ENCODE measurements at regions of chr13 and their contacts with region 1.

Region 1: GRCh38 chr13:45393941-45394570 is 24.1 kb downstream of the SLC25A30 start:
- DNase-seq: peak; percentile 63
- ATAC-seq: no peak
- H3K4me3 Mint-ChIP-seq: no peak overlapping the region
- H3K27ac Mint-ChIP-seq: no peak overlapping the region
- H3K4me1 Mint-ChIP-seq: peaks cover 44% of the 10 kb centered on the region
- H3K27me3 Mint-ChIP-seq: no peaks in the 10 kb centered on the region
- CTCF ChIP-seq: peak; percentile 74

Region 2: DNA sequence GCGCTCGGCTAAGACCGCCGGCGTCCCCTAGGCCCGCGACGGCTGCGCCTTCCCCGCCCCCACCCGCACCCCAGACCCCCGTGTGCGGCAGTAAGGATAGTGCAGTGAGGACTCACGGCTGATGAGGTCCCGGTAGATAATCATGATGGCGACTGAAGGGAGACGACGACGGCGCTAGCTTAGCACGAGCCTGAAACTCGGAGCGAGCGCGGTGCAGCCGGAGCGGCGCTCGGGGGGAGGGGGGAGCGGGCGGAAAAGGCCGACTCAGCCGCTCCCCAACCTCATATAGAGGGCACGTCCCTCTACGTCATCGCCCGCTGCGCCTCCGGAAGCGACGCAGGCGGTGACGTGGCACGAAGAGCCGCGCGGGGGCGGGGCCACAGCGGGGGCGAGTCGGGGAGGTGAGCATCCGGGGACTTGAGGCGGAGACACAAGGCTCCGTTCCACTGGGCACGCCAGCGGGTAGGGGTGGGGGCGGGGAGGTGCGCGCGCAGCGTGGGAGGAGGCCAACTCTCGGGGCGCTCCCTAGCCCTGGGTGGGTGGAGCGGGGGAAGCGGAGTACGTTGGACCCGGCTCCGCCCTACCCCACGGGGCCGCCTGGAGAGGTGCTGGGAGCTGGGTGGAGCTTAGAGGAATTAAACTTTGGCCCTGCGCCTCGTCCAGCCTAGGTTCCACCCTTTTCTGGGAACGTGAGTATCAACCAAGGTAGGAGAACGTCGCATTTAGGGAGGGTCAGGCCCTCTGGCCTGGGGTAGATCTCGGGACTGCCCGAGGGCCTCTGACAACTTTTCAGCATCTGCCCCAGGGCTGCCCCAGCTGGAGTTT is 52.9 kb before region 1 on chr13 and contains the start of gene TPT1:
- CTCF ChIA-PET with region 1: interaction called, 5 read pairs
- POLR2A ChIA-PET with region 1: interaction called, 19 read pairs
- intact Hi-C with region 1: loop called (anchors 2 kb)
- DNase-seq: peak; percentile 99
- ATAC-seq: peak; percentile 88
- H3K4me3 Mint-ChIP-seq: peak within 1 kb of the TSS; percentile 97
- H3K27ac Mint-ChIP-seq: peak within 1 kb of the TSS; percentile 100
- H3K4me1 Mint-ChIP-seq: peaks cover 44% of the 10 kb centered on the region
- H3K27me3 Mint-ChIP-seq: no peaks in the 10 kb centered on the region
- CTCF ChIP-seq: no peak
- total RNA-seq, gene TPT1: 3,533 to 3,563 TPM

Region 3: DNA sequence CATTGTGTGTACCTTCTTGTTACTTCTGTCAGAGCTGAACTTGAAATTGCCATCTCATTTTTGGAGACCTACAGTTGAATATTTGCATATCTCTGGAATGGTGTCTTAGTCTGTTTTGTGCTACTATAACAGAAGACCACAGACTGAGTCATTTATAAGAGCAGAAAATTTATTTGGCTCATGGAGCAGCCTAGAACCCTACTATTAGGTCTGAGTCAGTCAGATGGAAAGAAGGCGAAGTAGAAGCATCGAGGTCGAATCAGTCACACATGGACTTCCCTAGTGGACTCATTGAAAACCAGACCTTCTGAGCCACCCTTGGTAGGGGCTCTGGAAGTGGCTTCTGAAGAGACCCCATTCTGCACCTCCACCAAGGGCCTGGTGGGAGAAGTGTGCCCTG is 19.1 kb before region 1 on chr13:
- CTCF ChIA-PET with region 1: interaction called, 103 read pairs
- POLR2A ChIA-PET with region 1: interaction called, 5 read pairs
- intact Hi-C with region 1: no loop called
- DNase-seq: no peak
- ATAC-seq: no peak
- H3K4me3 Mint-ChIP-seq: no peak overlapping the region
- H3K27ac Mint-ChIP-seq: no peak overlapping the region
- H3K4me1 Mint-ChIP-seq: peaks cover 7% of the 10 kb centered on the region
- H3K27me3 Mint-ChIP-seq: no peaks in the 10 kb centered on the region
- CTCF ChIP-seq: no peak

Region 4: GRCh38 chr13:45412274-45413049 is 18.4 kb after region 1 on chr13:
- CTCF ChIA-PET with region 1: interaction called, 17 read pairs
- POLR2A ChIA-PET with region 1: interaction called, 28 read pairs
- intact Hi-C with region 1: no loop called
- DNase-seq: no peak
- ATAC-seq: no peak
- H3K4me3 Mint-ChIP-seq: no peak overlapping the region
- H3K27ac Mint-ChIP-seq: no peak overlapping the region
- H3K4me1 Mint-ChIP-seq: peaks cover 29% of the 10 kb centered on the region
- H3K27me3 Mint-ChIP-seq: no peaks in the 10 kb centered on the region
- CTCF ChIP-seq: no peak

Region 5: GRCh38 chr13:45417790-45418534 is 23.9 kb after region 1 on chr13 and contains the start of gene SLC25A30:
- CTCF ChIA-PET with region 1: interaction called, 17 read pairs
- POLR2A ChIA-PET with region 1: interaction called, 28 read pairs
- intact Hi-C with region 1: no loop called
- DNase-seq: peak; percentile 94
- ATAC-seq: peak; percentile 92
- H3K4me3 Mint-ChIP-seq: peak within 1 kb of the TSS; percentile 86
- H3K27ac Mint-ChIP-seq: peak within 1 kb of the TSS; percentile 94
- H3K4me1 Mint-ChIP-seq: peaks cover 18% of the 10 kb centered on the region
- H3K27me3 Mint-ChIP-seq: no peaks in the 10 kb centered on the region
- CTCF ChIP-seq: no peak
- total RNA-seq, gene SLC25A30: 18.9 to 21.2 TPM

Region 6: DNA sequence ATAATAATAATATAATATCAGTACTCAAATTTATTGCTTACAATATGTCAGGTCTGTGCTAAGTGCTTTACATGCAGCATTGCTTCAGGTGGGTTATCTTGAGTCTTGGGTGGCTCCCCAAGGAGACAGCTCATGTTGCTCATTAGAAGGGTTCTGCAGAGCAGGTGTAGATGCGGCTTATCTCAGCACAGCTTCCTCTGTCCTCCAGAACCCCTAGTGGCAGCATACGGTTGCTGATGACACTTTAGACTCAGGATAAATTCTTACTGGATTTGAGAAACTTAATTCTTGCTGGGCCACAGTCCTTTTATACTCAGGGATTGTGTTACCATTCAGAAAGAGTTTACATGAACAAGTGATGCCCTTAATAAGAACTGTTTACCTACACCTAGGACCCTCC is 79.6 kb after region 1 on chr13:
- CTCF ChIA-PET with region 1: interaction called, 6 read pairs
- POLR2A ChIA-PET with region 1: no interaction called
- intact Hi-C with region 1: loop called (anchors 5 kb)
- DNase-seq: peak; percentile 31
- ATAC-seq: peak; percentile 73
- H3K4me3 Mint-ChIP-seq: no peak overlapping the region
- H3K27ac Mint-ChIP-seq: no peak overlapping the region
- H3K4me1 Mint-ChIP-seq: peaks cover 58% of the 10 kb centered on the region
- H3K27me3 Mint-ChIP-seq: no peaks in the 10 kb centered on the region
- CTCF ChIP-seq: peak; percentile 10

Region 7: GRCh38 chr13:45548281-45548680 is 154.2 kb after region 1 on chr13:
- CTCF ChIA-PET with region 1: no interaction called
- POLR2A ChIA-PET with region 1: no interaction called
- intact Hi-C with region 1: no loop called
- DNase-seq: no peak
- ATAC-seq: no peak
- H3K4me3 Mint-ChIP-seq: no peak overlapping the region
- H3K27ac Mint-ChIP-seq: no peak overlapping the region
- H3K4me1 Mint-ChIP-seq: no peaks in the 10 kb centered on the region
- H3K27me3 Mint-ChIP-seq: no peaks in the 10 kb centered on the region
- CTCF ChIP-seq: no peak